Caco-2 (cell line): ENCODE measurements at regions of chrX and their contacts with region 1.

Region 1: DNA sequence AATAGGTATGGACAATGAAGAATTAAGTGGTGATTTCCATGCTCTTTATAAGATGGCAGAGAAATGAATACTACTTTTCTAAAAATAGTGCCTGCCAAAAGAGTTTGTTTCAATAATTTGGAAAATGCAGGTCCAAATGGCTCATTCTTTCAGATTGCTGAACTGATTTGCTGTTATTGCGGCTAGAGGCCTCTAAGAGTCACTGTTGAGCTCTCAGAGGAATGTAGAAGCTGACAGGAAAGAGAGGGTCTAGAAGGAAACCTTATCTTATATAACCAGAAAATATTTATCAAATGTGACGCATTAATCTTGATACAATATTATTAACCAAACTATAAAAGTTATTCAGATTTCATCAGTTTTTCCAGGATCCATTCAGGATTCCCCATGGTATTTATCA is 65.7 kb upstream of the PAGE1 start:
- DNase-seq: peak in 1 of 2 experiments; percentile 5
- H3K4me3 ChIP-seq: no peak overlapping the region
- H3K4me3 Mint-ChIP-seq: no peak overlapping the region
- H3K27ac Mint-ChIP-seq: no peak overlapping the region
- H3K4me1 ChIP-seq: no peaks in the 10 kb centered on the region
- H3K4me1 Mint-ChIP-seq: peaks cover 7% of the 10 kb centered on the region
- H3K27me3 ChIP-seq: no peaks in the 10 kb centered on the region
- H3K27me3 Mint-ChIP-seq: no peaks in the 10 kb centered on the region
- CTCF ChIP-seq: peak in 1 of 2 experiments; percentile 46

Region 2: DNA sequence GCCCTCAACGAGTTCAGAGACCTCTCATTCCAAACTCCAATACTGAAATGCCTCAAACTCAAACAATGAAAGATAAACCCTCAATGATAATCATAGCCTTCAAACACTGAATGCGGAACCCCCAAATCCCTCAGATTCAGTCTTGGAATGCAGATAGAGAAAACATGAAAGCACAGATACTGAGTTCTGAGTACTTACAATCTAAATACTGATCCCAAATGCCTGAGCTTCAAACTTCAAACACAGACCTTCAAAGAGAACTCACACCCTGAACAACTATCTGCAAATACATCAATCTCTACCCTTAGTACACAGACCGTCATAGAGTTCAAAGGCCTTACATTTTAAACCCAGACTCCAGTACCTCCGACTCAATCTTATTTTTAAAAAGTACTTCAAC is 50.7 kb after region 1 on chrX:
- CTCF ChIA-PET with region 1: no interaction called
- POLR2A ChIA-PET with region 1: no interaction called
- intact Hi-C with region 1: loop called (anchors 1 kb)
- DNase-seq: peak; percentile 46 to 61
- H3K4me3 ChIP-seq: no peak overlapping the region
- H3K4me3 Mint-ChIP-seq: peak overlapping the region; percentile 8
- H3K27ac Mint-ChIP-seq: peak overlapping the region; percentile 92
- H3K4me1 ChIP-seq: peaks cover 24% of the 10 kb centered on the region
- H3K4me1 Mint-ChIP-seq: no peaks in the 10 kb centered on the region
- H3K27me3 ChIP-seq: no peaks in the 10 kb centered on the region
- H3K27me3 Mint-ChIP-seq: no peaks in the 10 kb centered on the region
- CTCF ChIP-seq: no peak

Region 3: DNA sequence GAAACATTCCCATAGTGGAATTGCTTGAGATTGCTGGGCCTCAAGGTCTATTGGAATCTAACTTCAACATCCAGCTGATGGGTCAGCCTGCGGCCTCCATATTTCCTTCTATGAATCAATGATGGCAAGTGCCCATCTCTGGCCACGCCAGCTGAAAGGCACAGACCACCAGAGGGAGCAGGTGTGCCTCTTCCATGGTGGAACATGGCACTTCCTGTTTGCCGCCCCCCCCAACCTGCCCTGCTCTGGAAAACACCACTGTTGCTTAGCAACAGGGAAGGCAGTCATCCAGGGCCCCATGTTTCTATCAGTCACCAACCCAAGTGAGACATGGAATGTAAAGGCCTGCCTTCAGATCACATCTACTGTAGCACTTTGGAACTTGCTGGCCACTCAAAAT is 79.2 kb after region 1 on chrX:
- CTCF ChIA-PET with region 1: interaction called, 12 read pairs
- POLR2A ChIA-PET with region 1: no interaction called
- intact Hi-C with region 1: loop called (anchors 1 kb)
- DNase-seq: peak; percentile 80 to 88
- H3K4me3 ChIP-seq: no peak overlapping the region
- H3K4me3 Mint-ChIP-seq: no peak overlapping the region
- H3K27ac Mint-ChIP-seq: no peak overlapping the region
- H3K4me1 ChIP-seq: peaks cover 8% of the 10 kb centered on the region; the same call in 1 of the 2 replicates
- H3K4me1 Mint-ChIP-seq: no peaks in the 10 kb centered on the region
- H3K27me3 ChIP-seq: no peaks in the 10 kb centered on the region
- H3K27me3 Mint-ChIP-seq: no peaks in the 10 kb centered on the region
- CTCF ChIP-seq: peak; percentile 33 to 58

Region 4: GRCh38 chrX:49958727-49959485 is 197.4 kb after region 1 on chrX:
- CTCF ChIA-PET with region 1: no interaction called
- POLR2A ChIA-PET with region 1: no interaction called
- intact Hi-C with region 1: no loop called
- DNase-seq: no peak
- H3K4me3 ChIP-seq: no peak overlapping the region
- H3K4me3 Mint-ChIP-seq: no peak overlapping the region
- H3K27ac Mint-ChIP-seq: no peak overlapping the region
- H3K4me1 ChIP-seq: no peaks in the 10 kb centered on the region
- H3K4me1 Mint-ChIP-seq: no peaks in the 10 kb centered on the region
- H3K27me3 ChIP-seq: no peaks in the 10 kb centered on the region
- H3K27me3 Mint-ChIP-seq: no peaks in the 10 kb centered on the region
- CTCF ChIP-seq: no peak